Tibial artery (tissue), 4 donors: ENCODE measurements at regions of chr5 and their contacts with region 1.

Region 1: DNA sequence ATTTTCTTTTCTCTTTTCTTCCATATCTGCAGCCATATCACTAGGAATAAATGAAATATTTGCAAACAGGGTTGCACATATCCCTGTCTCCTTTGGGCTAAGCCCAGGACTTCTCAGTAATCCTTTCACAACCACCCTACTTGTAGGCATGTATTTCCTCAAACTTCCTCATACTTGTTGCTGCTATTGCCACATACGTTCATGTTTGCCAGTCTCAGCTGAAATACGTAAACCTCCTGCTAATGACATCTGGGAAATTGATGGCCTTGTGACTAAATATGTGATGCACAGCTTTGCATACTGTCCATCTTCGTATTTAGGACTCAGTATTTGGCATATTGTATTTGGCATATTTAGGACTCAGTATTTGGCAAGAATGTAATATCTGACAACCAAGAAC is 224.6 kb downstream of the PLK2 start:
- DNase-seq: peak in 1 of 2 donors; percentile 47
- H3K4me3 ChIP-seq: no peak overlapping the region
- H3K27ac ChIP-seq: peak overlapping the region in 1 of 2 donors; percentile 36
- H3K4me1 ChIP-seq: peaks cover 0 to 34% (median 9%) of the 10 kb centered on the region in 4 donors
- H3K27me3 ChIP-seq: no peaks in the 10 kb centered on the region
- CTCF ChIP-seq: no peak

Region 2: DNA sequence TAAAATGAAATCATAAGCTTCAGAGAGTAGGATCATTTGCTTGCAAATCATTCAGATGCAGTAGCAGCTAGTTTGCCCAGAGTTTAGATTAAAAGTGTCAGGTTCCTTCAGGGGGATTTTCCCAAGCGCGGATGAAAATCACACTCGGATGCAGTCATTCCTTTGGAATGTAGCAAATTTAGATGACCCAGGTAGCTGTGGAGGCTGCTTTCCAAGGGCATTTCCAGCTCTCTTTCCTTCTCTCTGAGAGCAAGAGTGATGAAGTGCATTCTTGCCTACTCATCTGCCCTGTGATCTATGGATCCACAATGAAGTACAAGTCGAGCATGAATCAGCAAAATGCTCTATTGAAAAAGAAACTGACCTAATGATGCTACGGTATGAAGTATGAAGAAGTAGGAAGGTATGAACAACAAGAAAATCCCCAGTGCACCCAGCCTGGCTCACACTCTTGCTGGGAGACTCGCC is 24.4 kb after region 1 on chr5:
- intact Hi-C with region 1: loop called (anchors 1 kb)
- DNase-seq: no peak
- H3K4me3 ChIP-seq: no peak overlapping the region
- H3K27ac ChIP-seq: peak overlapping the region in 1 of 2 donors; percentile 10
- H3K4me1 ChIP-seq: peaks cover 0 to 30% (median 10%) of the 10 kb centered on the region in 4 donors
- H3K27me3 ChIP-seq: no peaks in the 10 kb centered on the region
- CTCF ChIP-seq: no peak

Region 3: DNA sequence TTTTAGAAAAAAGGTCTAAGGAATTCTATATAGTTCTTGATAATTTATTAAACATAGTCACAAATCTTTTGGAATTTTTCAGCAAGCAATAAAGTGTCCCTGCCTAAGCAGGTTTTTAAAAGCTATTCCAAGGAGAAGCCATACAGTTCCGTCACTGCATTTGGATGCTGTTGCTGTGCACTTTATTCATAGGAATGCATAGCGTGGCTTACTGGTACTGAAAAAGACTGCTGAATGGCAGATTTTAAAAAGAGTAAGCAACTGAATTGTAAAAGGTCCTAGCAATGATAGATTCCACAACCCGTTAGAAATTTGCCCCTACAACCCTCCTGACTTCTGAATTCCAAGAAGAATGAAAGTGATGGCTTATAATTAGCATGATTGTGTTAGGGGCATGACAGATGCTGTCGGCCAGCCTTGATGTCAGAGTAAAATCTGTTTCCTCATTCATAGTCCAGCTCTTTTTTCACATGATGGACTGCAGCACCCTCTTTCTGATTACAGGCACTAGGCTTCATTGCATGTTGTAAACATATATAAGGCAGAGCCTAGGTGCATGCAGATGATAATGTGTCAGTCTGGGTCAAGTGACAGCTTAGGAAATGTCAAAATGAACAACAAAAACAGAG is 1431.3 kb after region 1 on chr5:
- intact Hi-C with region 1: loop called (anchors 5 kb)
- DNase-seq: no peak
- H3K4me3 ChIP-seq: no peak overlapping the region
- H3K27ac ChIP-seq: no peak overlapping the region
- H3K4me1 ChIP-seq: peaks cover 0 to 38% (median 5%) of the 10 kb centered on the region in 4 donors
- H3K27me3 ChIP-seq: no peaks in the 10 kb centered on the region
- CTCF ChIP-seq: no peak